ENCODE measurements at regions of chr7 and their contacts with region 1.

Region 1: GRCh38 chr7:106022193-106022821 is 59.2 kb downstream of the CDHR3 start:
- DNase-seq: peak; percentile 66 to 93 (median 80)
- ATAC-seq: peak; percentile 83
- H3K4me3 ChIP-seq: peak overlapping the region; percentile 25
- H3K4me3 Mint-ChIP-seq: peak overlapping the region; percentile 26
- H3K27ac ChIP-seq: peak overlapping the region; percentile 80 to 85
- H3K27ac Mint-ChIP-seq: peak overlapping the region; percentile 98
- H3K4me1 ChIP-seq: peaks cover 70% of the 10 kb centered on the region
- H3K4me1 Mint-ChIP-seq: peaks cover 81% of the 10 kb centered on the region
- H3K27me3 ChIP-seq: no peaks in the 10 kb centered on the region
- H3K27me3 Mint-ChIP-seq: no peaks in the 10 kb centered on the region
- CTCF ChIP-seq: no peak

Region 2: GRCh38 chr7:105691733-105692564 is 330.4 kb before region 1 on chr7:
- CTCF ChIA-PET with region 1: no interaction called
- POLR2A ChIA-PET with region 1: interaction called, 22 read pairs
- intact Hi-C with region 1: loop called (anchors 1 to 5 kb)
- DNase-seq: peak; percentile 50 to 94 (median 68)
- ATAC-seq: peak; percentile 82
- H3K4me3 ChIP-seq: peak overlapping the region; percentile 92
- H3K4me3 Mint-ChIP-seq: peak overlapping the region; percentile 87
- H3K27ac ChIP-seq: peak overlapping the region; percentile 94 to 97
- H3K27ac Mint-ChIP-seq: peak overlapping the region; percentile 98
- H3K4me1 ChIP-seq: peaks cover 53% of the 10 kb centered on the region
- H3K4me1 Mint-ChIP-seq: peaks cover 62% of the 10 kb centered on the region
- H3K27me3 ChIP-seq: no peaks in the 10 kb centered on the region
- H3K27me3 Mint-ChIP-seq: no peaks in the 10 kb centered on the region
- CTCF ChIP-seq: no peak

Region 3: DNA sequence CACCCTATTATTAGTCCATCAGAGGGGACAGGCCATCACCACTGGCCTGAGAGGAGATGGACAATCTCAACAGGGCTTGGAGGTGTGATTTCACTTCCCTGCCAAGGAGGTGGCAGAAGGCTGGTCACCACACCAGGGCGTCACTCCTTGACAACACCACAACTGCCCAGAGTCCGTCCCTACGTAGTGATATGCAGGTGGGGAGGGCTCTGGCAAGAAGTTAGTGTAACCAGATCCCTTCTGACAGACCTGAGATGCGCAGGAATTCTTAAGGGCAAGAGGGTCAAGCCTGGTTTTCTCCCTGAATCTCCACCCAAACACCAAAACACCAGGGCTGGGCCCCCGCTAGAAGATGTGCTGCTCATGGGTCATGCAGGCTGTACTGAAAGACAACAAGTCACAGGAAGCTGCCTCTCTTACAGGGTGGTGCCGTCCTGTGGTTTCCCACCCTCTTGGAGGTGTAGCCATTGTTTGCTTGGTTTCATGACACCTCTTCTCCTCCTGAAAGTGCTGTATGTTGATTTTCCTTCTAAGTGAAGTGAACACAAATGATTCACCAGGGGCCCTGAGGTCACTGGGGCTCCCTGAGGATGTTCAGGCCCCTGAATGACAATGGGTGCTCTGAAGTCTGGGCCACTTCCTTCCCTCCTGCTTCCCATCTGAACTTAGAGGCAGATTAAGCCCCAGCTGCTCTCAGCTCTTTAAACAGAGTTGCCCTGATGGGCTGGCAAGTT is 173.0 kb before region 1 on chr7:
- CTCF ChIA-PET with region 1: interaction called, 3 read pairs
- POLR2A ChIA-PET with region 1: interaction called, 11 read pairs
- intact Hi-C with region 1: loop called in 1 of 2 experiments (anchors 1 kb)
- DNase-seq: peak; percentile 20 to 91 (median 62)
- ATAC-seq: peak; percentile 89
- H3K4me3 ChIP-seq: peak overlapping the region; percentile 15
- H3K4me3 Mint-ChIP-seq: peak overlapping the region; percentile 78
- H3K27ac ChIP-seq: peak overlapping the region; percentile 48 to 59
- H3K27ac Mint-ChIP-seq: peak overlapping the region; percentile 90
- H3K4me1 ChIP-seq: peaks cover 51% of the 10 kb centered on the region
- H3K4me1 Mint-ChIP-seq: peaks cover 69% of the 10 kb centered on the region
- H3K27me3 ChIP-seq: no peaks in the 10 kb centered on the region
- H3K27me3 Mint-ChIP-seq: no peaks in the 10 kb centered on the region
- CTCF ChIP-seq: no peak

Region 4: GRCh38 chr7:105940104-105940503 is 82.2 kb before region 1 on chr7:
- CTCF ChIA-PET with region 1: no interaction called
- POLR2A ChIA-PET with region 1: no interaction called
- intact Hi-C with region 1: no loop called
- DNase-seq: no peak
- ATAC-seq: no peak
- H3K4me3 ChIP-seq: no peak overlapping the region
- H3K4me3 Mint-ChIP-seq: no peak overlapping the region
- H3K27ac ChIP-seq: no peak overlapping the region
- H3K27ac Mint-ChIP-seq: no peak overlapping the region
- H3K4me1 ChIP-seq: no peaks in the 10 kb centered on the region
- H3K4me1 Mint-ChIP-seq: no peaks in the 10 kb centered on the region
- H3K27me3 ChIP-seq: no peaks in the 10 kb centered on the region
- H3K27me3 Mint-ChIP-seq: no peaks in the 10 kb centered on the region
- CTCF ChIP-seq: no peak

Region 5: DNA sequence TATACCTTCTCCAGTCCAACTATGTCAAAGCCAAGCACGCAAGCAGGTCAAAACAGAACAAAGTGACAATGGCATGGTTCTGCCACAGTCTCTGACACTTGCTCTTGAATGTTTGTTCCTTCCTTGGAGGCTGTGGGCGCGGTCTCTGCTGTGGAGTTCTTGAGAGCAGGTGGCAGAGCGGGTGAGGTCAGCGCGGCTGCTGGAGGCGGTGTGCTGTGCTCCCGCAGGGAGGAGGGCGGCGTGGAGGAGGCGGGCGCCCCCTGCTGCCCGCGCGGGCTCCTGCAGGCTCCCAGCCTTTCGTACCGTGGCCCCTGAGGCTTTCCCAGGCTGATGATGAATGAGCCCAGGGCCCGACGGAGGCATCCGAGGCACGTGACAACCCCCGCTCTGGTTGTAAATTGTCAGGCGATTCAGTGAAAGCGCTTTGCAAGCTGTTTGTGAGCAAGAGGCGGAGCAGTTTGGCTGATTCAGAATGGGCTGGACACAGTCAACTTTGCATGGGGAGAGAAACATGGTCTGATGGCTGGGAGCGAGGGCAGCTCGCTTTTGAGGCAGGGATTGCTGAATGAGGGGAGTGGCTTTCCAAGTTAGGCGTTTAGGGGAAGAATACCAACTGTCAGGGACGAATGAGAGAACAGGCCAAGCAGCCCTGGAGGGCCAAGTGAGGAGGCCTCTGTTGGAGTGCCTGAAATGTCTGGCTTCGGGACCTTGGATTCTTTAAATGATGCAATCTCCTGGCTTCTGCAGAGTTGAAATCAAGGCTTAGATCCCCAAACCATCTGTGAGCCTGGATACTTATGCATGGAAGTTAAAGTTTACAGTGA is 12.7 kb before region 1 on chr7:
- CTCF ChIA-PET with region 1: interaction called, 23 read pairs
- POLR2A ChIA-PET with region 1: interaction called, 9 read pairs
- intact Hi-C with region 1: loop called in 1 of 2 experiments (anchors 1 kb)
- DNase-seq: peak; percentile 70 to 91 (median 78)
- ATAC-seq: peak; percentile 97
- H3K4me3 ChIP-seq: no peak overlapping the region
- H3K4me3 Mint-ChIP-seq: peak overlapping the region; percentile 16
- H3K27ac ChIP-seq: no peak overlapping the region
- H3K27ac Mint-ChIP-seq: peak overlapping the region; percentile 38
- H3K4me1 ChIP-seq: peaks cover 21% of the 10 kb centered on the region
- H3K4me1 Mint-ChIP-seq: peaks cover 51% of the 10 kb centered on the region
- H3K27me3 ChIP-seq: no peaks in the 10 kb centered on the region
- H3K27me3 Mint-ChIP-seq: no peaks in the 10 kb centered on the region
- CTCF ChIP-seq: peak; percentile 99

Region 6: GRCh38 chr7:106071356-106071998 is 49.2 kb after region 1 on chr7:
- CTCF ChIA-PET with region 1: no interaction called
- POLR2A ChIA-PET with region 1: interaction called, 17 read pairs
- intact Hi-C with region 1: no loop called
- DNase-seq: peak in 13 of 14 experiments; percentile 11 to 83 (median 34)
- ATAC-seq: peak; percentile 95
- H3K4me3 ChIP-seq: peak overlapping the region; percentile 44
- H3K4me3 Mint-ChIP-seq: peak overlapping the region; percentile 54
- H3K27ac ChIP-seq: peak overlapping the region; percentile 79 to 86
- H3K27ac Mint-ChIP-seq: peak overlapping the region; percentile 95
- H3K4me1 ChIP-seq: peaks cover 44% of the 10 kb centered on the region
- H3K4me1 Mint-ChIP-seq: peaks cover 63% of the 10 kb centered on the region
- H3K27me3 ChIP-seq: no peaks in the 10 kb centered on the region
- H3K27me3 Mint-ChIP-seq: no peaks in the 10 kb centered on the region
- CTCF ChIP-seq: no peak

Region 7: GRCh38 chr7:106285051-106285854 is 262.9 kb after region 1 on chr7:
- CTCF ChIA-PET with region 1: no interaction called
- POLR2A ChIA-PET with region 1: interaction called, 11 read pairs
- intact Hi-C with region 1: no loop called
- DNase-seq: peak; percentile 92 to 100 (median 97)
- ATAC-seq: peak; percentile 88
- H3K4me3 ChIP-seq: peak overlapping the region; percentile 75
- H3K4me3 Mint-ChIP-seq: peak overlapping the region; percentile 99
- H3K27ac ChIP-seq: peak overlapping the region; percentile 84 to 91
- H3K27ac Mint-ChIP-seq: peak overlapping the region; percentile 94
- H3K4me1 ChIP-seq: peaks cover 9% of the 10 kb centered on the region
- H3K4me1 Mint-ChIP-seq: peaks cover 37% of the 10 kb centered on the region
- H3K27me3 ChIP-seq: no peaks in the 10 kb centered on the region
- H3K27me3 Mint-ChIP-seq: no peaks in the 10 kb centered on the region
- CTCF ChIP-seq: no peak

Measured in CD4-positive, alpha-beta T cell (primary cell).